Cardiac septum (tissue), 1 donor: ENCODE measurements at regions of chr2 and their contacts with region 1.

Region 1: GRCh38 chr2:72892506-72893173 is 5.4 kb downstream of the SPR start:
- DNase-seq: peak; percentile 80

Region 2: GRCh38 chr2:72993147-72993932 is 100.7 kb after region 1 on chr2:
- intact Hi-C with region 1: loop called (anchors 5 kb)
- DNase-seq: no peak

Region 3: DNA sequence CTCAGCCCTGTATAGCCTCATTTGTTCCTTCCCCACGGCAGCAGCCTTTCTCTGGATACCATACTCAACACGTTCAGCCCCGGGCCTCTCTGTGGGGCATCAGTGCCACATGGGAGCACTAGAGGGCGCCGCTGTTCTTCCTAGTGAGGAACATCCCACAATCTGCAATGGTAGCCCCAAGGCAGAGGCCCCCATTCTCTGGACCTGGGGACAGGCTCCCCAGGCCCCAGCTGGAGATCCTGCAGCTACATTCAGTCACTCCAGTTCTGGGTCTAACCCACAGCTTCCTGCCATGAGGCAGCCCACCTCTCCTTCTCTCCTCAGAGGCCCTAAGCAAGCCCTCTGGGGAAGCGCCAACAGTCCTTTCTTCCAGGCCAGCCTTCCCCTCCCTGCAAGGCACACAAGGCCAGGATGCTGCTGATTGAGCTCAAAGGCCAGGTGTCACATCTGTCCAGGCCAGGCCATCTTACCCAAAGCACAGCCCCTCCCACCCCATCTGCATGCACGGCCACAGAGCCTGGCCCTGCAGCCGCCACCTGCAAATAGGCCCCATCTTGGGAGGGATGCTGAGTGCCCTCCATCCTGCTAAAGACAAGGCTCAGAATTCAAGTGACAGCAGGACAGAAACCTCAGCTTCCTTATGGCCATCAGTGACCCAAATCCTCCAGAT is 193.2 kb after region 1 on chr2:
- intact Hi-C with region 1: loop called (anchors 2 kb)
- DNase-seq: peak; percentile 92

Region 4: GRCh38 chr2:73176881-73177644 is 284.4 kb after region 1 on chr2:
- intact Hi-C with region 1: loop called (anchors 5 kb)
- DNase-seq: peak; percentile 92

Region 5: DNA sequence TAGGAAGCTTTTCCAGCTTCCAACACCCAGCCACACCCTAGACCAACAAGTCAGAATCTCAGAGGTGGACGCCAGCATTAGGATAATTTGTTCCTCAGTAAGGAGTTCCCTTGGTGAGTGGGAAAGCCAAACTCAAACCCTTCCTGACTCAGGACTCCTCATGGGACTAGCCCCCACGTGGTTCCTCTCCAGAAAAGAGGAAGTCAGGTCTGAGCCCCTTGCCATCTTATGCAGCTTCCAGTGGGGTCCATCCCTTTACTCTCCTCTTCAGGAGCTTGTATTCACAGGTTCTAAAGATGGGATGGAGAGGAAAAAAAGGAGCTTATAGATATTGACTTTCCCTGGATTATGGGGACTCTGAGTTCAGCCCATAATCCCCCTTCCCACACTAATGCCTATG is 294.9 kb after region 1 on chr2:
- intact Hi-C with region 1: no loop called
- DNase-seq: no peak